AG04450 (cell line): ENCODE measurements at regions of chr12 and their contacts with region 1.

Region 1: GRCh38 chr12:43338848-43339526 is 213.0 kb downstream of the ADAMTS20 start:
- DNase-seq: no peak
- H3K4me3 ChIP-seq: no peak overlapping the region
- H3K27ac ChIP-seq: no peak overlapping the region
- H3K27me3 ChIP-seq: no peaks in the 10 kb centered on the region
- CTCF ChIP-seq: peak; percentile 63

Region 2: DNA sequence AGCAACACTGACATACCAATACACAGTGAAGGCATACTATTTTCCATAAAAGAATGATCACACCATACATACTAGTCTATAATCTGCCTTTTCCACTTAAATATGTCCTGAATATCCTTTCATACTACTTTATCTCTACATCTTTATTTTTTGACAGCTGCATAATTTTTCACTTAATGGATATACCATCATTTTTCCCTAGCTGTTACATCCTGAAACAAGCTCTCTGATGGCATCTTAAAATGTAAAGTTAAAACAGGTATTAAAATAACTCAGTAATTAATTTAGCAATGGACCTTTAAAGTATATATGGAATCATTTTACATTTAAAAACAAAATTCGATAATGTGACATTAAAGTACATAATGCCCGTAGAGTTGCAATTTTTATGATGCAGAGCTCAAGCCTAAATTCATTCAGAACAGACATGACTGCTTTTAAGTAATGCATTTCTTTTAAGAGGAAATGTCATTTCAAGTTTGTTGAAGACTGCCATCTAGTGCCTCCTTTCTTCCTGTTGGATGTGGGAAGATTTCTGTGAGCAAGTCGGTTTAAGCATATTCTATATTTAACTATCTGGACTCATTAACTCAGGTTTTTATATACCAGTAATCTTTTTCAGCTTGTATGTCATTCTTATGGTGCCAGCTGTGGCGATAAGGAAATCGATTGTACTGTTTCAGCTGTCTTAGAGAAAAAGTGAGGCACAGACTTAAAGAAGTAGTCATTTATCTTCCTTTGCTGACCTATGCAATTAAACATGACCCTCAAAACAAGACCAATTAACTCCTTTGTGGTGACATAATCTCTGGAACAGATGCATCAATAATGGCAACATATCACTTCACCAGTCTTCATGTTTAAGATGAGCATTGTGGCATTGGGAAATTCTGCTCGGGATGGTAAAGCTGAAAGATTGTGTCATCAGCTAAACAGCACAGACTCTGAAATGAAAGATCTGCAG is 769.8 kb before region 1 on chr12:
- CTCF ChIA-PET with region 1: interaction called, 11 read pairs
- POLR2A ChIA-PET with region 1: no interaction called
- DNase-seq: no peak
- H3K4me3 ChIP-seq: no peak overlapping the region
- H3K27ac ChIP-seq: no peak overlapping the region
- H3K27me3 ChIP-seq: no peaks in the 10 kb centered on the region
- CTCF ChIP-seq: peak; percentile 66

Region 3: DNA sequence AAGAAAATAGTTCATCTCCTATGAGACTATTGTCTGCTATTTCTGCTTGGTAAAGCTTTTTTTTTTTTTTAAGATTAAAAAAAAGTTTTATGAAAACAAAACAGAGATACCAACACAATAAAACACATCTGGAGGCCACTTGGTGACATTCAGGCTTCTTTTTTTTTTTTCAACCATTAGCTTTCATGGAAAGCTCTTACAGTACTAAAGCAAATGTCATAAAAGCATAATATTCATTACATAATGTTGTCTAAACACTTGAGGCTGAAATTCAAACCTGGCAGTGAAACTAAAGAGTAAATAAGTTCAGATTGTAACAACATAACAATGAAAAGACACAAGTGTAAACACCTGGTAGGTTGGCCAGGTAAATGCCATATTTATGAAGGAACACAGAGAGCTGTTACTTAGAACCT is 764.1 kb before region 1 on chr12:
- CTCF ChIA-PET with region 1: interaction called, 11 read pairs
- POLR2A ChIA-PET with region 1: no interaction called
- DNase-seq: no peak
- H3K4me3 ChIP-seq: no peak overlapping the region
- H3K27ac ChIP-seq: no peak overlapping the region
- H3K27me3 ChIP-seq: no peaks in the 10 kb centered on the region
- CTCF ChIP-seq: no peak

Region 4: DNA sequence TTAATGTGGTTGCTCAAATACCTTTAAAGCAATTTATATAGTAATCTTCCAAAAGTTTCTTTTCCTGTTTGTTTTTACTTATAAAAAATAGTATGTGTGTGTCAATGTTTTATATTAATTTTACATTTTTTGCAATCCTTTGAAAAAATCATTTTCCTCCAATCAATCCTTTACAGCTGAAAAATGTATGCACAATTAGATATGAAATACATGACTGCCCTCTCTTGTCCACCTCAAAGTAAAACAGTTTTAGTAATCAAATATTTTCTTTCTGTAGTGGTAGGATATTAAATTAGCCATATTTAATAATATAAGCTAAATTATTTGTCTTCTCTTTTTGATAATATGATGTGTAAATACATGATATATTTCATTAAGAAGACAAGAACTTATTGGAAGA is 56.9 kb before region 1 on chr12:
- CTCF ChIA-PET with region 1: interaction called, 72 read pairs
- POLR2A ChIA-PET with region 1: no interaction called
- DNase-seq: no peak
- H3K4me3 ChIP-seq: no peak overlapping the region
- H3K27ac ChIP-seq: no peak overlapping the region
- H3K27me3 ChIP-seq: no peaks in the 10 kb centered on the region
- CTCF ChIP-seq: peak; percentile 49

Region 5: DNA sequence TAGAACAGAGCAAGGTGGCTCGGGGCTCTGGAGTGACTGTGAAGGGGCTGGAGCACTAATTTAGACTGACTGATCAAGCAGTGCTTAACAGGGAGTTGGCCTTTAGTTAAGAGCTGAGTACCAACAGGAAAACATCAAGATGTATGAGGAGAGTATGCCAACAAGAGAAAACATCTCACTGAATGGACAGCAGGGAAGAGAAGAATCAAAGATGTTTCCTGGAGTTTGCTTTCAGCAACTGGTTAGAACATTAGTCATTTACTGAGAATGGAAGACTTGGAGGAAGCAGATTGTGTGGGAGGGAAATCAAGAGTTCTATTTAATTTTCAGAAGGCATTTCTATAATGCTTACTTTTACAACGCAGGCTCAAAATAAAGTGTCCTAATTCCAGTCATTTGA is 46.3 kb before region 1 on chr12:
- CTCF ChIA-PET with region 1: interaction called, 56 read pairs
- POLR2A ChIA-PET with region 1: no interaction called
- DNase-seq: no peak
- H3K4me3 ChIP-seq: no peak overlapping the region
- H3K27ac ChIP-seq: peak overlapping the region; percentile 83
- H3K27me3 ChIP-seq: no peaks in the 10 kb centered on the region
- CTCF ChIP-seq: no peak

Region 6: DNA sequence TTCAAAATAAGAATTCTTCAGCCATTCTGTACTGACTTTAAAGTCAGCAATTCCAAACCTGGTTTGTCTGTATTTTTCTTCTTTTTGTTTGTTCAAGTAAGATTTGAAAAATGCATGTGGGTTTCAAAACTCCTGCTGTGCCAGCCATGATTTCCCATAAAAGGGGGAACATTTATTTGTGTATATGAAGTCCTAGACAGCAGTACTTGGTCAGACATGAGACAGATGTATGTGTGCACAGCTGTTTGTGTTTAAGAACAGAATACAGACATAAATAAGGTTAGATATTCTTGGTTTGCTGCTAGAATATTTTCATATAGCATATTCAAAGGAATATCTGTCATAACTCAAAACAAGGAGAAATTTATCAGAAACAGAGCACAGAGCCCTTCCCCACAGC is 23.0 kb before region 1 on chr12:
- CTCF ChIA-PET with region 1: interaction called, 17 read pairs
- POLR2A ChIA-PET with region 1: no interaction called
- DNase-seq: no peak
- H3K4me3 ChIP-seq: no peak overlapping the region
- H3K27ac ChIP-seq: no peak overlapping the region
- H3K27me3 ChIP-seq: no peaks in the 10 kb centered on the region
- CTCF ChIP-seq: no peak